Activated B cell treated with CpG ODN at 0.5 μM for 24 hours (primary cell): ENCODE measurements at regions of chr14 and their contacts with region 1.

Region 1: DNA sequence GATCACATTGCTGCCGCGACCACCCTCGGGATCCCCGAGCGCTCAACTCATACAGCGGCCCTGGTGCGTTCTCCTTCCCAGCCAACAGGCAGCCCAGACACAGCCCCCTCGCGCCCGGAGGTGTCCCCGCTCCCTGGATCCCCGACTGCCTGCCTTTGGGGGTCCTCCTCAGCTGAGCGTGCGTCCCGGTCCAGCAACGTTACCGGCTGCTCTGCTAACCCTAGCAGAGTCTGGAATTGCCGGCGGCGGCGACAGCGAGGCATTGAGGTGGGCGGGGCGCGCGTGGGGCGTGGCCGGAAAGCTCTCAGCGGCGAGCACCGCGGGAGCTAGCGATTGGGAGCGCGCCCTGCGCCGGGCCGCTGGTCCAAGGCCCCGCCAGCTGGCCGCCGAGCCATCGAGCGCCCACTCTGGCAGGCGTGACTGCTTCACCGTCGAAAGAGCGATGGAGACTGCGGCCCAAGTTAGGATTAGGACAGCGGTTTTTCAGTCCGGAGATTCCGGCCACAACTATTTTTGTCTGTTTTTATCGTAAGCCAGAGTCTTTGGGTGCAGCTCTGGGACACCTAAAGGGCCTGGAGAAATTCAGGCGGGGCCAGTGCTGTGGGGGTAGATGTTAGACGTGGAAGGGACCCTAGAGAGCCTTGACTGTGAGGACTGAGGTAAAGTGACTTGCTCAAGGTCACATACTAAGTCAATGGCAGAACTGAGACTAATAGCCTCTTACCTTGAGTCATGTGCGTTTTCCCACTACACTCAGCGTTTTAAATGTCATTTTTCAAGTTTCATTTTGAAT is at the start of gene HEATR5A:
- DNase-seq: peak; percentile 95
- ATAC-seq: peak; percentile 97
- H3K4me3 Mint-ChIP-seq: peak within 1 kb of the TSS; percentile 96
- H3K27ac Mint-ChIP-seq: peak within 1 kb of the TSS; percentile 90
- H3K4me1 Mint-ChIP-seq: peaks cover 22% of the 10 kb centered on the region
- H3K27me3 Mint-ChIP-seq: no peaks in the 10 kb centered on the region
- CTCF ChIP-seq: no peak
- total RNA-seq, gene HEATR5A: 11.1 and 13.2 TPM in 2 replicates

Region 2: DNA sequence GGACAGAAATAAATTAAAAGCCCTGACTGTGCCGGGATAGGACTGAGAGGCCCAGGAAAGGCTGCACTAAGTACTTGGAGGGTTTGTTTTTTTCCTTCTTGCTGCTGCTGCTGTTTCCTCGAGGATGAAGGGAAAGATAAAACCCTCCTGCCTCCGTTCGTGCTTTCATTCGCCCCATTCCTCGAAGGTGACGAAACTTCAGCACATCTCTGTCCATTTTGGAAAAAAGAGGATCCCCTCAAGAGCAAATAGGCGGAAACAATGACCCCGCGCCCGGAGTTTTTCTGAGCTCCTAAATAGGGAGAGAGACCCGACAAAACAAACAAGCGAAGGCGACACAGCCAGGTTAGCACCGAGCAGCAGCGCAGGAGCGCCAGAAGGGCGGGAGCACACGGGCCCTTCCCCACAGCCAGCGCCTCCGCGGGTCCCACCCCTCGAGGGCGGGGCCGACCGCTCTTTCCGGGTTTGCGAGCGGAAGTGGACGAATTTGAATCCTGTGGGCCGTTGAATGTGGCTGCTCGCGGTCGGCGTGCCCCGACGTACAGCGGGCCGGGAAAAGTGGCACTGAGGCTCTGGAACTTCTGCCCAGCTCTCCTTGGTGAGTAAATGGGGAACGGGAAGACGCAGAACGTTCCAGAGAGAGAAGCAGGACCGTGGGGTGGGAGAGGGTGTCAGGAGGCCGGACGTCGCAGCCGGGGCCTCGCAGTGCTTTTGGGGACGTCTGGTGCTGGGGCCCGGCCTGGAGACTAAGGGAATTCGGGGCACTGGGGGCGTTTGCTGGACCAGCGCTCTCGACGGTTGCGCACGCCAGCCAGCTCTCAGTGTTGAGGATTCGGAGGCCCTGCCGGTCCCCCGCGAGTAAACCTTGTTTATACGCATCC is 861.6 kb before region 1 on chr14 and contains the start of gene G2E3:
- CTCF ChIA-PET with region 1: no interaction called
- POLR2A ChIA-PET with region 1: interaction called, 3 read pairs
- intact Hi-C with region 1: loop called (anchors 1 kb)
- DNase-seq: peak; percentile 88
- ATAC-seq: peak; percentile 99
- H3K4me3 Mint-ChIP-seq: peak within 1 kb of the TSS; percentile 100
- H3K27ac Mint-ChIP-seq: peak within 1 kb of the TSS; percentile 98
- H3K4me1 Mint-ChIP-seq: peaks cover 29% of the 10 kb centered on the region
- H3K27me3 Mint-ChIP-seq: no peaks in the 10 kb centered on the region
- CTCF ChIP-seq: no peak
- total RNA-seq, gene G2E3: 23.5 and 32.6 TPM in 2 replicates

Region 3: GRCh38 chr14:30621940-30622830 is 798.3 kb before region 1 on chr14 and contains the start of gene SCFD1:
- CTCF ChIA-PET with region 1: no interaction called
- POLR2A ChIA-PET with region 1: interaction called, 4 read pairs
- intact Hi-C with region 1: loop called (anchors 2 kb)
- DNase-seq: peak; percentile 92
- ATAC-seq: peak; percentile 97
- H3K4me3 Mint-ChIP-seq: peak within 1 kb of the TSS; percentile 93
- H3K27ac Mint-ChIP-seq: peak within 1 kb of the TSS; percentile 93
- H3K4me1 Mint-ChIP-seq: peaks cover 47% of the 10 kb centered on the region
- H3K27me3 Mint-ChIP-seq: no peaks in the 10 kb centered on the region
- CTCF ChIP-seq: no peak
- total RNA-seq, gene SCFD1: 70.1 and 83.6 TPM in 2 replicates

Region 4: GRCh38 chr14:31456841-31457664 is 36.5 kb after region 1 on chr14 and contains the start of gene DTD2:
- CTCF ChIA-PET with region 1: interaction called, 3 read pairs
- POLR2A ChIA-PET with region 1: interaction called, 22 read pairs
- intact Hi-C with region 1: loop called (anchors 1 kb)
- DNase-seq: peak; percentile 82
- ATAC-seq: peak; percentile 98
- H3K4me3 Mint-ChIP-seq: peak within 1 kb of the TSS; percentile 99
- H3K27ac Mint-ChIP-seq: peak within 1 kb of the TSS; percentile 96
- H3K4me1 Mint-ChIP-seq: peaks cover 31% of the 10 kb centered on the region
- H3K27me3 Mint-ChIP-seq: no peaks in the 10 kb centered on the region
- CTCF ChIP-seq: no peak
- total RNA-seq, gene DTD2: 19.8 and 21.3 TPM in 2 replicates

Region 5: DNA sequence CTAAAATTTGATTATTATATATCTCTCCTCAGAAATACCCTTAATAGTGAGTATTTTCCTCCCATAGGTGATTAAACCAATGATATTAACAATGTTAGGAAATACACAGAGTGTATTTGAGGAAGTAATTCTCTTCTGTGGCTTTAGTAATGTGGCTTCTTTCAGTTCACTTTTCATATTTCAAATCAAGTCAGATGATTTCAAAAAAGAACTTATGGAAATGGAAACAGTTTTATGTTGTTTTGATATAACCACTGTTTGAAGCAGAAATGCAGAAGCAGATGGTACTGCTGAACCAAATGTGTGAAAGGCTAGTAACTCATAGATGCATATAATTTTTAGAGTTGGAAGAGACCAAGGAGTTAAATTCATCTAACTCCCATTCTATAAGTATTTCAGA is 69.2 kb after region 1 on chr14:
- CTCF ChIA-PET with region 1: no interaction called
- POLR2A ChIA-PET with region 1: no interaction called
- intact Hi-C with region 1: loop called (anchors 2 kb)
- DNase-seq: no peak
- ATAC-seq: peak; percentile 75
- H3K4me3 Mint-ChIP-seq: peak overlapping the region; percentile 25
- H3K27ac Mint-ChIP-seq: peak overlapping the region; percentile 16
- H3K4me1 Mint-ChIP-seq: peaks cover 71% of the 10 kb centered on the region
- H3K27me3 Mint-ChIP-seq: no peaks in the 10 kb centered on the region
- CTCF ChIP-seq: no peak

Region 6: DNA sequence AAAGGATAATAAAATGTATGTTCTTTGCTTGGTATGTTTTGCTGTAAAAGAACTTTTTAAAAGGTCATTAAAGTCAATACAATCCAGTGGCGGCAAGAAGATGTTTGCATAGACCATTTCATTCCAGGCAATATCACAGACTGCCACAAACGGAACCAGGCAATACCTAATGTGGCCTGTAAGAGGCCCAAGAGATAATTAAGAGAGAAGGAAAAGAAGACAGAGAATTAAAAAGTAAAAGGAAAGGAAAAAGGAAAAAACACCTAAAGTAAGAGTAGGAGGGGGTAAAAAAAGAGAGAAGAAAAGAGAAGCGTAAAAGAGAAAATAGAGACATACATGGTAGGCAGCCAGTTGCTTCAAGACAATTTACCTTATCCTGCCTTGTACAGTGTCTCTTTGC is 649.8 kb after region 1 on chr14:
- CTCF ChIA-PET with region 1: no interaction called
- POLR2A ChIA-PET with region 1: no interaction called
- intact Hi-C with region 1: no loop called
- DNase-seq: no peak
- ATAC-seq: no peak
- H3K4me3 Mint-ChIP-seq: no peak overlapping the region
- H3K27ac Mint-ChIP-seq: no peak overlapping the region
- H3K4me1 Mint-ChIP-seq: peaks cover 3% of the 10 kb centered on the region
- H3K27me3 Mint-ChIP-seq: peaks cover 3% of the 10 kb centered on the region
- CTCF ChIP-seq: no peak